Activated CD4-positive, alpha-beta T cell treated with anti-CD3 and anti-CD28 coated beads, Interleukin-2, amount 10 ng/mL, durations not matched to agents 24 days and 14 days (primary cell): ENCODE measurements at regions of chr2 and their contacts with region 1.

Region 1: GRCh38 chr2:7203055-7203467 is 285.8 kb downstream of the RNF144A start:
- DNase-seq: peak; percentile 88
- H3K4me3 Mint-ChIP-seq: no peak overlapping the region
- H3K27ac Mint-ChIP-seq: no peak overlapping the region
- H3K4me1 Mint-ChIP-seq: peaks cover 3% of the 10 kb centered on the region
- H3K27me3 Mint-ChIP-seq: peaks cover 2% of the 10 kb centered on the region

Region 2: DNA sequence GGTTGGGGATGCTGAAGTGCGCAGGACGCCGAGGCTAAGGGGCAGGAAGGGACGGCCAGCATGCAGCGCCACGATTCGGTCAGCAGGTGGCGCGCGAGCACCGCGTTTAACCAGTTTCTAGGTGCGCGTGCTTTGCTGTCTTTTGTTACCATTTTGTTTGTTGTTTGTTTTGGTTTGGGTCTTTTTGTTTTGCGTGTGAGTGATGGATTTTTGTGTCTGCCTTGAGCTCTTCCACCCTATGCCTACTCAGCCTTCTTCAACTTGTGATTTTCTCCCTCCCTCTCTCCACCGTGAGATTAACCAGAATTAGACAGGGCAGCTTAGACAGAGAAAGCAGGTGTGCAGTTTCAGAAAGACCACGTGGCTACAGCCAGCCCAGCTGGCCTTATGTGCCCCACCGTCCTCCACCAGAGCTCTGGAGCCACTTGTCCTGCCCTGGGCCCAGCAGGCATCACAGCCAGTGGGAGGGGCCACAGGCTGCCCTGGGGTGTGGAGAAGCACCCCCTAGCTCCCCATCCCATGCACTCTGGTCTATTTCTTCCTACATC is 105.6 kb before region 1 on chr2:
- intact Hi-C with region 1: loop called (anchors 5 kb)
- DNase-seq: peak; percentile 93
- H3K4me3 Mint-ChIP-seq: peak overlapping the region; percentile 64
- H3K27ac Mint-ChIP-seq: no peak overlapping the region
- H3K4me1 Mint-ChIP-seq: peaks cover 7% of the 10 kb centered on the region
- H3K27me3 Mint-ChIP-seq: no peaks in the 10 kb centered on the region

Region 3: DNA sequence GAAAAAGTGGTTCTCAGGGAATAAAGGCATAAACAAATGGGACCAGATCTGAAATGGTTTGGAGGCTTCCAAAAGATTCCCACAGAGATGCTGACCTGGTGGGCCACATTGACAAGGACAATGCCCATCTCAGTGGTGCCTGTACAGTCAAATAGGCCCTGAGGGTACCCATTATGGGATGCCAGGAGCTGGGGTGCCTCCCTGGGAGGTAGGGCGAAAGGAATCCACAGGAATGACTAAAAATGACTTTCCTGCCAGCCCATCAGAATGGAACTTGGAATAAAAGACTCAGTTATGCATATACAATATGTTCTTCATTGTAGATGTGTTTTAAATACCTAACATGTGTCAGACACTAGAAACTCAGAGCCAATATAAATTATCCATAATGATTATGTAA is 37.3 kb before region 1 on chr2:
- intact Hi-C with region 1: no loop called
- DNase-seq: no peak
- H3K4me3 Mint-ChIP-seq: no peak overlapping the region
- H3K27ac Mint-ChIP-seq: no peak overlapping the region
- H3K4me1 Mint-ChIP-seq: no peaks in the 10 kb centered on the region
- H3K27me3 Mint-ChIP-seq: peaks cover 2% of the 10 kb centered on the region